Activated T-helper 1 cell treated with anti-CD3 and anti-CD28 coated beads, Interleukin-12 subunit alpha, Interleukin-12 subunit beta, Interleukin-2, Interleukin-4 antibody, amounts not matched to agents 30 ng/mL and 10 ng/mL and 1 ng/mL, durations not matched to agents 14 hours and 24 hours and 36 hours (primary cell): ENCODE measurements at regions of chr15 and their contacts with region 1.

Region 1: GRCh38 chr15:64162870-64163658 is at the start of gene PPIB:
- DNase-seq: peak; percentile 97
- H3K4me3 Mint-ChIP-seq: peak within 1 kb of the TSS; percentile 94
- H3K27ac Mint-ChIP-seq: peak within 1 kb of the TSS; percentile 93
- H3K4me1 Mint-ChIP-seq: peaks cover 56% of the 10 kb centered on the region
- H3K27me3 Mint-ChIP-seq: no peaks in the 10 kb centered on the region
- total RNA-seq, gene PPIB: 383 and 388 TPM in 2 replicates

Region 2: DNA sequence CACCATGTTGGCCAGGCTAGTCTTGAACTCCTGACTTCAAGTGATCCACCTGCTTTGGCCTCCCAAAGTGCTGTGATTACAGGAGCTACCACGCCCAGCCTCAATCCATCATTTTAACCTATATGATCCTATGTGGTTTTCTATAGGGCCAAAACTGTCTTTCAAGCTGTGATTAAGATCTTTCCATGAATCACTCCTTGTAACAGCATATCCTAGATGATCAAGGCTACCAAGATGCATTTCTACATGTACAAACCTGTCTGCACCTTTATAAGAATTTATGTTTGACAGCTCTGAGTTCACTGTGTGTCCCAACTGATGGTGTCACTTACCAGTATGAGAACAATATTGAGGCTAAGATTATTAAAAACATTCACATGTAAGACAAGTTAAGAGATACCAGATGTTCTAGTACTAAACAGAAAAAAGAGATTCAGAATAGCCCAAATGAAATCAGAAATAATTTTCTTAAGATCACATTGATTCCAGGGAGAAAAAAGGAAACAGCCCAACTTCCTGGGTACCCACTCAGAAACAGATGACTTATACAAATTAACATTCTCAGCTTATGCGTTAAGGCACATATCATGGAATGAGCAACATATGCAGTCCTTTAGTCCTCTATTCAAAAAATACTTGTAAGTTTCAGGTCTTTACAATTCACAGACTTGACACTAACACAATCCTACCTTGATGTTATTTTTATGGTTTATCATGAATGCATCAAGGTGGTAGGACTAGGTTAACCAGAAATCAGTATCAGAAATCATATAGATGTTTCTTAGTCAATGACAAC is 24.5 kb after region 1 on chr15:
- intact Hi-C with region 1: loop called (anchors 1 kb)
- DNase-seq: no peak
- H3K4me3 Mint-ChIP-seq: peak overlapping the region; percentile 21
- H3K27ac Mint-ChIP-seq: peak overlapping the region; percentile 62
- H3K4me1 Mint-ChIP-seq: peaks cover 19% of the 10 kb centered on the region
- H3K27me3 Mint-ChIP-seq: no peaks in the 10 kb centered on the region

Region 3: GRCh38 chr15:64355944-64356709 is 193.1 kb after region 1 on chr15 and contains the start of gene CSNK1G1:
- intact Hi-C with region 1: loop called (anchors 1 kb)
- DNase-seq: peak; percentile 87
- H3K4me3 Mint-ChIP-seq: peak within 1 kb of the TSS; percentile 96
- H3K27ac Mint-ChIP-seq: peak within 1 kb of the TSS; percentile 97
- H3K4me1 Mint-ChIP-seq: peaks cover 19% of the 10 kb centered on the region
- H3K27me3 Mint-ChIP-seq: no peaks in the 10 kb centered on the region
- total RNA-seq, gene CSNK1G1: 31.3 and 33.2 TPM in 2 replicates

Region 4: GRCh38 chr15:64381000-64381752 is 218.1 kb after region 1 on chr15 and contains the start of gene PCLAF:
- intact Hi-C with region 1: loop called (anchors 1 kb)
- DNase-seq: peak; percentile 93
- H3K4me3 Mint-ChIP-seq: peak within 1 kb of the TSS; percentile 94
- H3K27ac Mint-ChIP-seq: peak within 1 kb of the TSS; percentile 92
- H3K4me1 Mint-ChIP-seq: peaks cover 16% of the 10 kb centered on the region
- H3K27me3 Mint-ChIP-seq: no peaks in the 10 kb centered on the region
- total RNA-seq, gene PCLAF: 58.6 and 69.8 TPM in 2 replicates

Region 5: DNA sequence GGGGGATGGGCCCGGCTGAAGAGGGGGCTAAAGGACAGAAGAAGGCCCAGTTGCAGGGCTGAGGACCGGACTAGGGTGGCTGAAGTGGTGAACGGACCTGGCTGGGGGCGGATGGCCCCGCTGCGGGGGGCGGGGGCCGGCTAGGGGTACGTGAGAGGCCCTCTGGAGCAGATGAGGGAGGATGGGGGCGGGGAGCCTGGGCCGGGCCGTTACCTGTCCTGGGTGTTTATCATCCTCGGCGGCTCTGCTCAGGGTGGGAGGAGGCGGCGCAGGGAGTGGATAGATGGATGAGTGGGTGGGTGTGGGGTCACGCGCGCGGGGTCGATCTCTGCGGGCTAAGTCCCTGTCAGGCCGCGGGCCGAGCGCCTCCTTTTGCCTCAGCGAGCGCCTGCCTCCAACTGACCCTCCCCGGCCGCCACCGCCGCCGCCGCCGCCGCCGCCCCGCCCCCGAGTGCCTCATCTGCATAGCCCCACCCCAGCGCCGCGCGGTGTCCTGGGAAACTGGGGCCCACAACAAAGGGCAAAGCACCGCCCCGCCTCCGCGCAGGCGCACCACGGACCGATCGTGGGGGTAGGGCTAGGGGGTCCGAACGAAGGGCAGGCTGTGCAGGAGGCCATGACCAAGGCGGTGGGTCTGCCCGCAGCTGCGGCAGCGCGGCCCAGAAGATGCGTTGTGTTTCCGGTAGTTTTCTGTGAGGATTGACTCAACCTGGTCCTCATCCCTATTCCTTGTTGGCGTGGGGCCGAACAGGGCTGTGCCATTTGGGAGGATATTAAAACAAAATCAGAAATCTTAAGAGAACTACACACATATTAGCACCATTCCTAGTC is 540.0 kb after region 1 on chr15:
- intact Hi-C with region 1: loop called (anchors 2 kb)
- DNase-seq: peak; percentile 93
- H3K4me3 Mint-ChIP-seq: peak overlapping the region; percentile 82
- H3K27ac Mint-ChIP-seq: peak overlapping the region; percentile 78
- H3K4me1 Mint-ChIP-seq: peaks cover 51% of the 10 kb centered on the region
- H3K27me3 Mint-ChIP-seq: peaks cover under 1% of the 10 kb centered on the region

Region 6: GRCh38 chr15:64836023-64836536 is 673.0 kb after region 1 on chr15:
- intact Hi-C with region 1: loop called (anchors 5 kb)
- DNase-seq: no peak
- H3K4me3 Mint-ChIP-seq: peak overlapping the region; percentile 57
- H3K27ac Mint-ChIP-seq: peak overlapping the region; percentile 80
- H3K4me1 Mint-ChIP-seq: peaks cover 41% of the 10 kb centered on the region
- H3K27me3 Mint-ChIP-seq: no peaks in the 10 kb centered on the region